Left lung (tissue), 14 donors: ENCODE measurements at regions of chr18 and their contacts with region 1.

Region 1: GRCh38 chr18:21740724-21741510 is at the start of gene MIB1:
- DNase-seq: peak; percentile 61 to 99 (median 94)
- ATAC-seq: peak; percentile 85
- H3K4me3 ChIP-seq: peak within 1 kb of the TSS; percentile 93 to 95
- H3K27ac ChIP-seq: peak within 1 kb of the TSS; percentile 97 to 98
- H3K4me1 ChIP-seq: peaks cover 7 to 36% of the 10 kb centered on the region in 2 donors
- H3K27me3 ChIP-seq: no peaks in the 10 kb centered on the region
- CTCF ChIP-seq: peak in 1 of 2 donors; percentile 7
- polyA plus RNA-seq, gene MIB1: 56.7 to 64.3 (median 59.1) TPM

Region 2: GRCh38 chr18:21452796-21453510 is 288.0 kb before region 1 on chr18:
- intact Hi-C with region 1: no loop called
- DNase-seq: peak in 2 of 4 donors; percentile 23 to 26
- ATAC-seq: no peak
- H3K4me3 ChIP-seq: no peak overlapping the region
- H3K27ac ChIP-seq: no peak overlapping the region
- H3K4me1 ChIP-seq: peaks cover 0 to 3% of the 10 kb centered on the region in 2 donors
- H3K27me3 ChIP-seq: no peaks in the 10 kb centered on the region
- CTCF ChIP-seq: no peak

Region 3: GRCh38 chr18:21548637-21549036 is 192.3 kb before region 1 on chr18:
- intact Hi-C with region 1: no loop called
- DNase-seq: no peak
- ATAC-seq: no peak
- H3K4me3 ChIP-seq: no peak overlapping the region
- H3K27ac ChIP-seq: no peak overlapping the region
- H3K4me1 ChIP-seq: no peaks in the 10 kb centered on the region
- H3K27me3 ChIP-seq: no peaks in the 10 kb centered on the region
- CTCF ChIP-seq: no peak

Region 4: DNA sequence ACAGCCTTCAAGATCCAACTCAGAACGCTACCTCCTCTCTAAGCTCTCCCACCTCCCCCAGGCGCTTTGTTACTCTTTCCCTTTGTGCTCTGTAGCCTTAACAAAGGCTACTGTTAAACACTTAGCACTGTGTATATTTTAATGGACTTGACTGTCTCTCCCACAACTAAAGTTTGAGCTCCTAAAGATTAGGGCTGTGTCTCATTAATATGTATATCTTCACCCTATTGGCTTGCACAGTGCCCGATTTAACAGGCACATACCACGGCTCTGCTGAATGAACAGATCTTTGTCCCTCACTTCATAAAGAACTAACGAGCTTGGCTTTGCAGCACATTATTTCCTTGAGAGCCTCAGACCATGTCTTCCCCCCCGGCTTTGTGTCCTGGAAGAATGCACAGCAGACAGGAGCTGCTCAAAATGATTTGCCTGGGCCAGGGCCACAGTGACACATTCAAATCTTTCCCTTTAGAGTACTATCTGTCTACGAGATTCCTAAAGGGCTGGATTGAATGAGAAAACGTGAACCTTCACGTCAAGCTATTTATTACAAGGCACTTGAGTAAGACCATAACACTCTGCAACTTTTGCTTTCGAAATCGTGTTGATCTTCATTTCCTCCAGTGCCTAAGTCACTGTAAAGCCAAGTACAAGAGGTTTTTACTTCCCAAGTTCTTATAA is 58.4 kb before region 1 on chr18:
- intact Hi-C with region 1: loop called in 1 of 2 experiments (anchors 10 kb)
- DNase-seq: peak in 2 of 4 donors; percentile 61 to 72
- ATAC-seq: peak; percentile 87
- H3K4me3 ChIP-seq: peak overlapping the region; percentile 14 to 23
- H3K27ac ChIP-seq: peak overlapping the region; percentile 76 to 85
- H3K4me1 ChIP-seq: peaks cover 5 to 35% of the 10 kb centered on the region in 2 donors
- H3K27me3 ChIP-seq: no peaks in the 10 kb centered on the region
- CTCF ChIP-seq: no peak

Region 5: DNA sequence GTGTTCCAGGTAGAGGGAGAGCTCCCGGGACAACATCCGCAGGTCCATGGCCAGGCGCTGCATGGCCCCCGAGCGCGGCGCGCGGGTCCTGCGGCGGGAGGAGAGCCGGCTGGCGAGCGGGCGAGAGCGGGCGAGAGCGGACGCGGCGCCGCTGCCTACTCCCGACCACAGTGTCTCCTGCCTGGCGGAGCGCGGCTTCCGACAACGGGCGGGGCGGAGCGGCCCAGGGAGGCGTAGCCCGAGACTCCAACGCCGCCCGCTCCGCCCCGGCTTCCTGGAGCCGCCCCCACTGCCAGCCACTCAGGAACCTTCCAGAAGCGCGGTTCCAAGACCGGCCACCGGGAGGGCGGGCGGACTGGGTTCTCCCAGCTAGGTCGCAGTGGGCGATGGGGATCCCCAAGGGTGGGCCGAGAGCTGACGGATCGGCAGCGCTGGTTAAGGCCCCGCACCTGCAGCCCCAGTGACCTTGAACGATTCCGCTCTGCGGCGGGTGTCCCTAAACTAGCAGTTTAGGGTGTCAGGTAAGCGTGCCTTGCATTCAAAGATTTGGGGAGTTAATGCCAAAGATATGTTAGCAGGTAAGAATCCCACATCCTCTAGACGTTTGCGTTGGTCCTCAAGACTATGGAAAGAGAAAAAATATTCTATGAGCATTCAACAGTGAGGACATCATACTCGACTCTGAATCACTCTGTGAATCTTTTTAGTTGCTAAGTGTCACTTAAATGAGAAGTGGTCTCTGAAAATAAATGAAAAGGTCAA is 36.1 kb before region 1 on chr18 and contains the start of gene ABHD3:
- intact Hi-C with region 1: loop called in 1 of 2 experiments (anchors 5 kb)
- DNase-seq: peak; percentile 87 to 100 (median 95)
- ATAC-seq: peak; percentile 99
- H3K4me3 ChIP-seq: peak within 1 kb of the TSS; percentile 74 to 88
- H3K27ac ChIP-seq: peak within 1 kb of the TSS; percentile 97 to 98
- H3K4me1 ChIP-seq: peaks cover 0 to 32% of the 10 kb centered on the region in 2 donors
- H3K27me3 ChIP-seq: no peaks in the 10 kb centered on the region
- CTCF ChIP-seq: peak; percentile 44 to 86
- polyA plus RNA-seq, gene ABHD3: 22.1 to 32.5 (median 26.2) TPM

Region 6: DNA sequence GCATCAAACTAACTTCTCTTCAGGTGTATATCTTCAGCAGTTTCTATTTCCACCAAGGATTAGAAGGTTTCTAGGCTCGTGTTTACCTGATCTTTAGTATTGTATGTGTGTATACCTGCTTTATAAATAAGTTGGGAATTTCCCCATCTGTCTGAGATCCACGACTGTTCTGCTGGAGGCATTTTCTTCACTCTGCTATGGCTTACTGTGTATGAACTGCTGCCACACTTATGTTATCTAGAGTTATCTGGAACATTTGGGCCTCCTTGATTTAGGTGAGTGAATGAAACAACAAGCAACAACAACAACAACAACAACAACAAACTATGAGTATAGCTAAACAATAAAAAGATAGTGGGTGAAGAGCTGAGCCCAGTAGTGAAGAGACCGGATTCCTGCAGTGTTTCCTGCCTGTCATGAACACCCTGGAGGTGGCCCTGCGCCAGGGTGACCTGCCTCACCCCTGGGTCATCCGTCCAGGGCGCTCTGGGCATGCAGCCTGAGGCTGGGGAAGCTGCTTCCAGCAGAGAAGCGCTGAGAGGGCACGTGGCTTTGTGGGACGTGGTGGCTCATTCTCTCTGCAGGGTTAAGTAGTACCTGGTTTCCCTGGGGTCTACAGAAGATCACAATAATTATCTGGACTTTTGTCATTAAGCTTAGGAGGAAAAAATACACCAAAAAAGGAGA is 372.4 kb after region 1 on chr18:
- intact Hi-C with region 1: no loop called
- DNase-seq: peak in 1 of 4 donors; percentile 61
- ATAC-seq: no peak
- H3K4me3 ChIP-seq: no peak overlapping the region
- H3K27ac ChIP-seq: no peak overlapping the region
- H3K4me1 ChIP-seq: no peaks in the 10 kb centered on the region
- H3K27me3 ChIP-seq: no peaks in the 10 kb centered on the region
- CTCF ChIP-seq: no peak